Naive thymus-derived CD4-positive, alpha-beta T cell (primary cell): ENCODE measurements at regions of chr6 and their contacts with region 1.

Region 1: DNA sequence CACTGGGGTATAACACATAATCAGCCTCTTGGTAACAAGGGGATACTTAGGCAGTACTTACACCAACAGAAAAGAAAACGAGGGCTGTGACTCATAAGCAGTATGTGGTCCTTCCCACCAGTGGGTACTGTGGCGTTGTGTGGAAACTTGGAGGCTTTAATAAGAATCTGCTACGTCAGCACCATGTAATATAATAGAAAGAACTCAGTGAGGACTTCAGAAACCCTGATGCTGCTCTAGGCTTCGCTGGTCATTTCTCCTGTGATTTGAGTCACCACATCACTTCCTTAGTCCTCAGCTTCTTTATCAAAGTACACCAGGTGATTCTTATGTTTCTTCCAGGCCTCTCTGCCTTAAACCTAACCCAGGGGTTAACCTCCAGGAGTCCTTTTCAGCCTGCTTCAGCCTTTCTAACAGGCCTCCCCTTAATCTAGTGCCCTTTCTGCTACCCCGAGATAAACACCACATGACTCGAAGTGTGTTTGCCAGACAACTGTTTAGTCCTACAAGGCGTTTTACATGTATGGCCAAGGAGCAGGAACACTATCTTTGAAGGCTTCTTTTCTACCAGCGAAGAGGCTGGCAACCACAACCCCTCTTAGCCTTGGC is 68.5 kb downstream of the FYN start:
- DNase-seq: peak in 8 of 9 donors; percentile 31 to 77 (median 56)
- ATAC-seq: peak; percentile 89
- H3K4me3 ChIP-seq: peak overlapping the region; percentile 7
- H3K4me3 Mint-ChIP-seq: peak overlapping the region; percentile 20 to 73 (median 64)
- H3K27ac ChIP-seq: peak overlapping the region; percentile 68
- H3K27ac Mint-ChIP-seq: peak overlapping the region; percentile 78 to 97 (median 92)
- H3K4me1 ChIP-seq: peaks cover 59 to 64% of the 10 kb centered on the region in 2 donors
- H3K4me1 Mint-ChIP-seq: peaks cover 54 to 96% (median 88%) of the 10 kb centered on the region in 7 donors
- H3K27me3 ChIP-seq: no peaks in the 10 kb centered on the region
- H3K27me3 Mint-ChIP-seq: no peaks in the 10 kb centered on the region

Region 2: GRCh38 chr6:110408891-110409290 is 1395.8 kb before region 1 on chr6:
- CTCF ChIA-PET with region 1: no interaction called
- POLR2A ChIA-PET with region 1: no interaction called
- intact Hi-C with region 1: no loop called
- DNase-seq: no peak
- ATAC-seq: no peak
- H3K4me3 ChIP-seq: no peak overlapping the region
- H3K4me3 Mint-ChIP-seq: no peak overlapping the region
- H3K27ac ChIP-seq: no peak overlapping the region
- H3K27ac Mint-ChIP-seq: no peak overlapping the region
- H3K4me1 ChIP-seq: no peaks in the 10 kb centered on the region
- H3K4me1 Mint-ChIP-seq: no peaks in the 10 kb centered on the region
- H3K27me3 ChIP-seq: no peaks in the 10 kb centered on the region
- H3K27me3 Mint-ChIP-seq: peaks cover 0 to 3% (median 0%) of the 10 kb centered on the region in 5 donors

Region 3: GRCh38 chr6:111764238-111765175 is 40.2 kb before region 1 on chr6:
- CTCF ChIA-PET with region 1: no interaction called
- POLR2A ChIA-PET with region 1: interaction called, 3 read pairs
- intact Hi-C with region 1: loop called (anchors 1 to 2 kb)
- DNase-seq: peak in 2 of 9 donors; percentile 48 to 63
- ATAC-seq: peak; percentile 23
- H3K4me3 ChIP-seq: peak overlapping the region; percentile 18
- H3K4me3 Mint-ChIP-seq: peak overlapping the region; percentile 48 to 94 (median 69)
- H3K27ac ChIP-seq: peak overlapping the region; percentile 97
- H3K27ac Mint-ChIP-seq: peak overlapping the region; percentile 84 to 100 (median 98)
- H3K4me1 ChIP-seq: peaks cover 90 to 93% of the 10 kb centered on the region in 2 donors
- H3K4me1 Mint-ChIP-seq: peaks cover 74 to 100% (median 99%) of the 10 kb centered on the region in 7 donors
- H3K27me3 ChIP-seq: no peaks in the 10 kb centered on the region
- H3K27me3 Mint-ChIP-seq: no peaks in the 10 kb centered on the region

Region 4: DNA sequence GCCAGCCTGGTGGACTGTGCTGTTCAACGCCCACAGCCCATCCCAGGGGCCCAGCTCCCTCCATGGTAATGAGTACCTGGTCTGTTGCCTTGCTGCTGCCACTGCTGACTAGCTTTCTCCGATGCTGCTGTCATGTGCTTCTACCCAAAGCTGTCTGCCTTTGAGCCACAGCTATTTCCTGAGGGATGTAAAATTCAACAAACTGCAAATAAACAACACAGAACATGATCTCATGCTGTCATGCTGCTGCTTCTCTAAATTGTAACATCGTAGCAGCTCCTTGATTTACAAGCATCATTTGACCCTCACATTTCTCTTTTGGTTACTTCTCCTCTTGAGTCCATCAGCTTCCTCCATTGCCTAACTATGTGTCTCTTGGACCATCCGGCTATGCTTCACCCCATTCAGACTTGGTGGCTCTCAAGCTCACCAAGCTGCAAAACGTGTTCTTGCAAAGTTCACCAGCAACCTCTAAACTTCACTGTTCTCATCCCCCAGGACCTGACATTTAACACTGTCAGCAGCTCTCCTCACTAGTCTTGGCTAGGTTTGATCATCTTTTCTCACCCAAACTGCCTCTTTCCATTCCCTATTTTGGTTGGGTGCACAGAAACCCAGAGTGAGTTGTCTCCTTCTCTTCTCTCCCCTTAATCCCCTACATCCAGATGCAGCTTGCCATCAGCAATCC is 14.0 kb after region 1 on chr6:
- CTCF ChIA-PET with region 1: interaction called, 3 read pairs
- POLR2A ChIA-PET with region 1: interaction called, 6 read pairs
- intact Hi-C with region 1: loop called (anchors 1 to 2 kb)
- DNase-seq: no peak
- ATAC-seq: peak; percentile 44
- H3K4me3 ChIP-seq: no peak overlapping the region
- H3K4me3 Mint-ChIP-seq: peak overlapping the region; percentile 23 to 77 (median 50)
- H3K27ac ChIP-seq: peak overlapping the region; percentile 19
- H3K27ac Mint-ChIP-seq: peak overlapping the region; percentile 48 to 90 (median 75)
- H3K4me1 ChIP-seq: peaks cover 35 to 45% of the 10 kb centered on the region in 2 donors
- H3K4me1 Mint-ChIP-seq: peaks cover 36 to 85% (median 79%) of the 10 kb centered on the region in 7 donors
- H3K27me3 ChIP-seq: no peaks in the 10 kb centered on the region
- H3K27me3 Mint-ChIP-seq: no peaks in the 10 kb centered on the region

Region 5: GRCh38 chr6:111841822-111842221 is 37.1 kb after region 1 on chr6:
- CTCF ChIA-PET with region 1: interaction called, 5 read pairs
- POLR2A ChIA-PET with region 1: no interaction called
- intact Hi-C with region 1: loop called (anchors 1 to 2 kb)
- DNase-seq: peak in 7 of 9 donors; percentile 38 to 63 (median 61)
- ATAC-seq: no peak
- H3K4me3 ChIP-seq: no peak overlapping the region
- H3K4me3 Mint-ChIP-seq: no peak overlapping the region
- H3K27ac ChIP-seq: peak overlapping the region; percentile 62
- H3K27ac Mint-ChIP-seq: no peak overlapping the region
- H3K4me1 ChIP-seq: peaks cover 98 to 100% of the 10 kb centered on the region in 2 donors
- H3K4me1 Mint-ChIP-seq: peaks cover 0 to 55% (median 0%) of the 10 kb centered on the region in 7 donors
- H3K27me3 ChIP-seq: no peaks in the 10 kb centered on the region
- H3K27me3 Mint-ChIP-seq: no peaks in the 10 kb centered on the region